IMR-90 (cell line): ENCODE measurements at regions of chr2 and their contacts with region 1.

Region 1: GRCh38 chr2:36355151-36355889 is at the start of gene CRIM1:
- DNase-seq: peak; percentile 91
- ATAC-seq: peak; percentile 77
- H3K4me3 ChIP-seq: peak within 1 kb of the TSS; percentile 96
- H3K27ac ChIP-seq: peak within 1 kb of the TSS; percentile 92
- H3K4me1 ChIP-seq: peaks cover 10% of the 10 kb centered on the region
- H3K27me3 ChIP-seq: no peaks in the 10 kb centered on the region
- CTCF ChIP-seq: no peak
- POLR2A ChIP-seq: peak; percentile 98
- RAD21 ChIP-seq: 0 out of 2 replicates have a peak, but pooled peaks have one; percentile 13
- total RNA-seq, gene CRIM1: 436 and 490 TPM in 2 replicates

Region 2: DNA sequence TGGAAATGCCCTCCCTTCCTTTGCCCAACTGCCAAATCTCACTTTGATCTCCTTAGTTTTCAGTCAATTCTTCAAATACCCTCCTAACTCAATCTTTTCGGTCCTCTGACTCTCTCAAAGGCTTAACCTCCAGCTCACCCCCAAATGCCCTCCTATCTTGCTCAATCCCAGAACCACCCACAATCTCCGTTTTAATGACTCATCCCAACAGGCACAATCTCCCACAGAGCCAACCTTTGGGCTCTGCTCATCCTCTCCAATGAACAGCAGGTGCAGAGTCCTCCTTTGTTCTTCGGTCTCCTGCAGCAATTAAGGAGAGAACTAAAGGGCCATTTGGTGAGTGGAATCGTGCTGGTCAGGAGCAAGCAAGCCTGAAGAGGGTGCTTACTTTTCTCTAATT is 365.8 kb before region 1 on chr2:
- CTCF ChIA-PET with region 1: no interaction called
- POLR2A ChIA-PET with region 1: no interaction called
- dilution Hi-C with region 1: no loop called
- in situ Hi-C with region 1: no loop called
- intact Hi-C with region 1: no loop called
- DNase-seq: no peak
- ATAC-seq: no peak
- H3K4me3 ChIP-seq: no peak overlapping the region
- H3K27ac ChIP-seq: no peak overlapping the region
- H3K4me1 ChIP-seq: no peaks in the 10 kb centered on the region
- H3K27me3 ChIP-seq: no peaks in the 10 kb centered on the region
- CTCF ChIP-seq: no peak
- POLR2A ChIP-seq: no peak
- RAD21 ChIP-seq: no peak

Region 3: GRCh38 chr2:36438449-36438977 is 83.2 kb after region 1 on chr2:
- CTCF ChIA-PET with region 1: no interaction called
- POLR2A ChIA-PET with region 1: no interaction called
- dilution Hi-C with region 1: no loop called
- in situ Hi-C with region 1: no loop called
- intact Hi-C with region 1: loop called (anchors 1 kb)
- DNase-seq: peak; percentile 99
- ATAC-seq: peak; percentile 91
- H3K4me3 ChIP-seq: no peak overlapping the region
- H3K27ac ChIP-seq: peak overlapping the region; percentile 67; the same call in 1 of the 2 replicates
- H3K4me1 ChIP-seq: peaks cover 22% of the 10 kb centered on the region
- H3K27me3 ChIP-seq: no peaks in the 10 kb centered on the region
- CTCF ChIP-seq: no peak
- POLR2A ChIP-seq: peak; percentile 28; the same call in 1 of the 2 replicates
- RAD21 ChIP-seq: 0 out of 2 replicates have a peak, but pooled peaks have one; percentile 8

Region 4: GRCh38 chr2:36486546-36487044 is 131.3 kb after region 1 on chr2:
- CTCF ChIA-PET with region 1: no interaction called
- POLR2A ChIA-PET with region 1: interaction called, 3 read pairs
- dilution Hi-C with region 1: no loop called
- in situ Hi-C with region 1: no loop called
- intact Hi-C with region 1: loop called (anchors 1 kb)
- DNase-seq: peak; percentile 82
- ATAC-seq: peak; percentile 32
- H3K4me3 ChIP-seq: no peak overlapping the region
- H3K27ac ChIP-seq: peak overlapping the region; percentile 86
- H3K4me1 ChIP-seq: peaks cover 44% of the 10 kb centered on the region
- H3K27me3 ChIP-seq: no peaks in the 10 kb centered on the region
- CTCF ChIP-seq: no peak
- POLR2A ChIP-seq: no peak
- RAD21 ChIP-seq: no peak

Region 5: DNA sequence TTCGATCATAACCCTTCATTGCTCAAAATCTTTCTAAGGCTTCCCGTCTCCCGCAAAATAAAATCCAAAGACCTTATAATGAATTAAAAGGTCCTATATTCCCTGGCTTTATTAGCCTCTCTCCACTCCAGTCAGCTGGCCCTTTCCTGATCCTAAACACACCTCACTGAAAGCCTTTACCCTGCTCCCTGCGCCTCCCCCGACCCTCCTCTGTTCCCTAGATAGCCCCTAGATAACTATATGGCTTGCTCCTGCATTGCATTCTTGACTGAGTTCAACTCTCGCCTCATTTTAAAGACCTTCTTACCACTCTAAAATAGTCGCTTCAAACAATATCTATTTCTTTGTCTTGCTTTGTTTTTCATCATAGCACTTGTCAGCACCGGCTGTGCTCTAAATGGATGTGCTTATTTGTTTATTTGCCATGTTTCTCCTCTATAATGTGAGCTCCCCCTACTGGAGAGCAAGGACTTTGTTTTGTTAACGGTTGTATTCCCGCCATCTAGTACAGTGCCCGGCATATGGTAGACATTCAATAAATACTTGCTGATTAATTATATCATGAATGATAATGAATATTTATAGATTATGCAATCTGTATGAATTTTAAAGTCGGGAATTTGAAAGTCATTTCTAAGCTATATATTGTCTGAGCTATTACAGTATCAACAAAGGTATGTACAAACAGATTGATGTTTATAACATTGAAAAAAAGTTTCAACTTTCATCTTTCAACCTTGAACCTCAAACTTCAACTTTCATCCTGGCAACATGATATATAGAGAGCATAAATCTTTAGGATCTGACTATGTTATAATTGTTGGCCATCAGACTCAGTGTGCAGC is 308.8 kb after region 1 on chr2:
- CTCF ChIA-PET with region 1: interaction called, 7 read pairs
- POLR2A ChIA-PET with region 1: no interaction called
- dilution Hi-C with region 1: no loop called
- in situ Hi-C with region 1: loop called (anchors 5 kb)
- intact Hi-C with region 1: no loop called
- DNase-seq: peak; percentile 71
- ATAC-seq: peak; percentile 85
- H3K4me3 ChIP-seq: no peak overlapping the region
- H3K27ac ChIP-seq: no peak overlapping the region
- H3K4me1 ChIP-seq: peaks cover 9% of the 10 kb centered on the region
- H3K27me3 ChIP-seq: no peaks in the 10 kb centered on the region
- CTCF ChIP-seq: peak; percentile 70
- POLR2A ChIP-seq: no peak
- RAD21 ChIP-seq: peak; percentile 75

Region 6: DNA sequence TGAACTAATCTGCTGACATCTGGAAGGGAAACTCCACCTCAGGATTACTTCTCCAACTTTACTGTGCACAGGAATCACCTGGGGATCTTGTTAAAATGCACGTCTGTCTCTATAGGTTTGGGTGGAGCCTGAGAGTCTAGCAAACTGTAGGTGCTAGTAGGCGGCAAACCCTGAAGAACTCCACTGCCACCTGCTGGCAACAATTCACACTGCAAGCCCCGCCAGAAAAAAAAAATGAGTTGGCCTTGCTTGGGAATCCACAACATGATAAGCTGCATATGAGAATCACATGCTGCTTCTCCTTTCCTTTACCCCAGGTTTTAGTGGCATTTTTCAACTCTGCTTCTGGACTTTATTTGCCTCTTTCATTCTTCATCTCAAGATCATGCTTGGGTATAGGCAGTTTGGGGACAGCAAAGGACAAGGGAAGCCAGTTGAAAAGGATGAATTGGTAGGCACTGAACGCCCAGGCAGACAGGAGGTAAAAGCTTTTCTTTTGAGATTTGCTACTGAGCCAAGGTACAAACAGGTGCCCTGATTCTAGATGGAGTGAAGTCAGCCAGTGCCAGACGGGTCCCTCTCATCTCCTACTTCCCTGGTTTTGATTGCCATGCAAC is 430.0 kb after region 1 on chr2:
- CTCF ChIA-PET with region 1: interaction called, 6 read pairs
- POLR2A ChIA-PET with region 1: no interaction called
- dilution Hi-C with region 1: no loop called
- in situ Hi-C with region 1: loop called (anchors 5 kb)
- intact Hi-C with region 1: loop called (anchors 5 kb)
- DNase-seq: peak; percentile 57
- ATAC-seq: peak; percentile 93
- H3K4me3 ChIP-seq: no peak overlapping the region
- H3K27ac ChIP-seq: no peak overlapping the region
- H3K4me1 ChIP-seq: no peaks in the 10 kb centered on the region
- H3K27me3 ChIP-seq: peaks cover 32% of the 10 kb centered on the region
- CTCF ChIP-seq: peak; percentile 94
- POLR2A ChIP-seq: no peak
- RAD21 ChIP-seq: peak; percentile 78

Region 7: GRCh38 chr2:37026050-37026449 is 670.7 kb after region 1 on chr2:
- CTCF ChIA-PET with region 1: no interaction called
- POLR2A ChIA-PET with region 1: no interaction called
- dilution Hi-C with region 1: no loop called
- in situ Hi-C with region 1: no loop called
- intact Hi-C with region 1: no loop called
- DNase-seq: no peak
- ATAC-seq: no peak
- H3K4me3 ChIP-seq: no peak overlapping the region
- H3K27ac ChIP-seq: no peak overlapping the region
- H3K4me1 ChIP-seq: peaks cover 4% of the 10 kb centered on the region
- H3K27me3 ChIP-seq: no peaks in the 10 kb centered on the region
- CTCF ChIP-seq: no peak
- POLR2A ChIP-seq: no peak
- RAD21 ChIP-seq: no peak